OCI-LY7 (cell line): ENCODE measurements at regions of chr22 and their contacts with region 1.

Region 1: GRCh38 chr22:39309881-39310714 is 9.3 kb downstream of the RPL3 start:
- DNase-seq: peak; percentile 40
- H3K4me3 ChIP-seq: no peak overlapping the region
- H3K27ac ChIP-seq: peak overlapping the region; percentile 38
- H3K4me1 ChIP-seq: peaks cover 40% of the 10 kb centered on the region
- CTCF ChIP-seq: no peak

Region 2: DNA sequence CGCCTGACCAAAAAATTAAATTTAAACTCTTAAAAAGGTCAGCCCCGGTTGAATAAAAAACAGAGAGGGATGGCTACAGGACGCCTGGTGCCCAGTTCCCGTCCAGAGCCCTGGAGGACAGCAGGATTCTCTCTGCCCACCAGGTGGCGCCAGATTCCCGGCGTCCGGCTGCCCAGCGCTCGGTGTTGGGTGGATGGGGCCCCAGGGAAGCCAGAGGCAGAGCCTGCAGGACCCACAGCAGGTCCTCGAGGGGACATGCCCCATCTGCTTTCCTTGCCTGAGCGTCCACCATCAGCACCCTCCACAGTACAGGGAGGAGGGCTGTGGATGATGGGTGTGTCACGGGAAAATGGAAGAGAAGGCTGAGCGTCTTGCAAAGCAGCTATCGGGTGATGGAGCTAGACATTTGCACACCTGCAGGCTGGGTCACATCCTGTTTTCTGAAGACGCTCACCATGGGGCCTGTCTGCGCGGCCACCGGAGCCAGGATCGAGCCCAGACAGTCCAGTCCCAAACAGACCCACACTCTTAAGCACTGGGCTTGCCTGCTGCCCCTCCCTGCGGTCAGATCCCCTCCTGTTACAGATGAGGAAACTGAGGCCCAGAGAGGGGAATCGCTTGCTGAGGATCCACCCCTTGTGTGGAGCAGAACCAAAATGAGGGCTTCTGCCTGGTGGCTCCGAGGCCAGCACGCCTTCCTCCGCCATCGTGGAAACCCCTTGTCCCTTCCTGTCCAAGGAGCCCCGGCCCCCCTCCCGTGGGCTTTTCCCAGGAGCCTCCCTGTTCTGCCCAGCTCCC is 139.1 kb before region 1 on chr22:
- CTCF ChIA-PET with region 1: interaction called, 10 read pairs
- POLR2A ChIA-PET with region 1: no interaction called
- intact Hi-C with region 1: loop called (anchors 1 kb)
- DNase-seq: peak; percentile 91
- H3K4me3 ChIP-seq: peak overlapping the region; percentile 48
- H3K27ac ChIP-seq: peak overlapping the region; percentile 91
- H3K4me1 ChIP-seq: peaks cover 67% of the 10 kb centered on the region
- CTCF ChIP-seq: peak; percentile 97

Region 3: DNA sequence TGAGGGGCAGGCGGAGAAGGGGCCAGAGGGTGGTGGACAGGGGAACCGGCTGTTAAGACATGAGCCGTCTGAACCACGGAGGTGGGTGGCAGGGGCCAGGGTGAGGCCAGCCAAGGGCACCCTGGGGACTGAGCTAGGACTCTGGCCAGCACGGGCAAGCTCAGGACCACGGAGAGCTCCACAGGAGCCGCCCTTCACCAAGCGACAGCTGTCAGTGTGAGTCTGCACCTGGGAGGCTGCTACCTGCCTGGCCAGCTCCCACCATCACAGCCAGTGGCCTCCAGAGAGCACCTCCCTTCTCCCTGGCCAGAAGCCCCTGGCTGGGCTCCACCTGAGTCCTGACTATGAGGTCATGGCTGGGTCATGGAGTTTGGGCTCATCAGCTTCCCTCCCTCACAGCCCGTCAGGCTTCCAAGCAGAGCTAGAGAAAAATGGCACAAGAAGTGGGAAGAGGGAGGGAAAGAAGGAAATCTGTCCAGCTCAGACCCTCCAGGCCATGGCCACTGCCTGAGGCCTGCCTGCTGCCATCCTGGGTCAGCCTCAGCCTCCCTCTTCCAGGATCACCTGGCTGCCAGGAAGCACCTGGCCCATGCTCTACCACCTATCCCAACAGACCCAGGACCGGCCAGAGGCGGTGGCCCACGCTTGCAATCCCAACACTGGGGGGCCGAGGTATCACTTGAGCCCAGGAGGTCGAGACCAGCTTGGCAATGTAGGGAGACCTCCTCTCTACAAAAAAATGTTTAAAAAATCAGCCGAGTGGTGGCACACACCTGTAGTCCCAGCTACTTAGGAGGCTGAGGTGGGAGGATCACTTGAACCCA is 168.6 kb after region 1 on chr22:
- CTCF ChIA-PET with region 1: no interaction called
- POLR2A ChIA-PET with region 1: no interaction called
- intact Hi-C with region 1: no loop called
- DNase-seq: no peak
- H3K4me3 ChIP-seq: no peak overlapping the region
- H3K27ac ChIP-seq: no peak overlapping the region
- H3K4me1 ChIP-seq: peaks cover 11% of the 10 kb centered on the region
- CTCF ChIP-seq: no peak